Right ventricle myocardium inferior (tissue), 1 donor: ENCODE measurements at regions of chr20 and their contacts with region 1.

Region 1: DNA sequence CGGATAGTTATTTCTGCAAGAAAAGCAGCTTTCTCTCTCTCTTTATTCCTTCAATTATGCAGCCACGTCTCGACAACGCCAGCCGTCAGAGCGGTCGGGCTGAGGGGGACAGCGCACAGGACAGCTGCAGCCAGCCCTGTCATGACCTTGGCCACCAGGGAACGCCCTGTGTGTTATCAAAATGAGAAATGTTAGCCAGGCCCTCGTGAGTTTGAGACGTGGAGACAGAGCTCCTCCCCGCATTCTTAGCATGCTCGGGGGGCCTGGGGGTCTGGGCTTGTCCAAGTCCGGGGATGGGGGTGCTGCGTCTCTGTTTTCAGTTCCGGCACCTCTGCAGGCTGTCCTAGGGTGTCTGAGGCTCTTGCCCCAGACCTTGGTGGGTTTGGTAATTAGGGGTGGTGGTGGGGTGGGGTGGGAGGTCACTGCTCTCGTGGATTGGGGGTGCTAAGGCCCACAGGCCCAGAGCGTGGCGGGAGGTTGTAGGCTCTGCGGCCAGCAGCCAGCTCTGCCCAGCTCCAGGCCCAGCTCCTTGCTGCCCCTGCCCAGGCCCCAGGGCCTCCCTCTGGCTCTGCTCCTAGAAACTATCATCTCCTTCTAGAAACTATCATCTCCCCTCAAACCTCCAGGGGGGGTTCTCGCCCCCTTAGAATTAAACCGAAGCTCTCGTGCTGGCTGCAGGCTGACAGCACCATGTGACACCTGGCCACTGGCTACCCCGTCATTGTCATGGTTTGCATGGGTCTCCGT is 54.3 kb upstream of the GATA5 start:
- DNase-seq: no peak
- ATAC-seq: peak; percentile 76

Region 2: GRCh38 chr20:62550087-62550632 is 20.1 kb after region 1 on chr20:
- intact Hi-C with region 1: loop called (anchors 1 kb)
- DNase-seq: peak; percentile 89
- ATAC-seq: peak; percentile 88

Region 3: GRCh38 chr20:62760856-62761758 is 231.0 kb after region 1 on chr20:
- intact Hi-C with region 1: no loop called
- DNase-seq: peak; percentile 59
- ATAC-seq: no peak

Region 4: DNA sequence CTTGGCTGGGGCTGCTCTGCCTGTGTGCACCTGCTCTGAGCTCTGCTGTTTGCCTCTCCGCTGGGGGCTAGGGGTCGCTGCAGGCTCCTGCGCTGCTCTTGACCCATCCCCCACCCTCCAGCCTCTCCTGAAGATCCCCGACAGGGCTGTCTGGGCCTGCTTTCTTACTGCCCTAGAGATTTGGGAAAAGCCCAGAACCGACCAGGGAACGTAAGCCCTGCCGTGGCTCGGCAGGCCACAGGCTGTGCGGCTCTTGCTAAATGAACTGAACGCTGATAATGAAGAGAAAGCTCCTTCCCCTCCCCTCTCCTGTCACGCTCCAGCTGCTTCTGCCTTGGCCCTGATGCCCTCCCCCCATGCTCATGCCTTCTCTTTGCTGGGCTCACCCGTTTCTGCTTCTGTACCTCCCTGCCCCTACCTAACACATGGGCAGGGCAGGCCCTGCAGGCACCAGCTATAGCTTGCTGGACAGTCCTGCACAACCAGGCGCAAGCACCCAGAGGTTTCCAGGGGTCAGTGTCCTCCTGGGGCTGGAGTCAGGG is 1693.5 kb after region 1 on chr20:
- intact Hi-C with region 1: no loop called
- DNase-seq: peak; percentile 47
- ATAC-seq: peak; percentile 74